PC-9 (cell line): ENCODE measurements at regions of chr11 and their contacts with region 1.

Region 1: DNA sequence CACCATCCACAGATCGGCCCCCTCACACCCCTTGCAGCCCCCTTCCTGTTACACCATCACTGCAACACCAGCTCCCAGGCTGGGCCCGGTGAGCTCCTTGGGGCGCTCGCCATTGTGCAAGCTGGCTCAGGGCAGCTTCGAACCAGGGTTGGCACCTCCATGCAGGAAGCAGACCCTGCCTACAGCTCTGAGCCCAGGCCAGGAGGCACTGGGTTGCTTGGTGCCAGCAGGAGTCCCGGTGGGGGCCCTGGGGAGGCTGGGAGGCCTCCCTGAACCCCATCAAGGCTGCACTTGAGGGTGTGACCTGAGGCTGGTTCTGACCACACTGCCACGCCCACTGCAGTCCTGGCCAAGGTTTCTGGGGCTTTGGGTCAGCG is 417.1 kb downstream of the CTTN start:
- DNase-seq: no peak
- H3K4me3 ChIP-seq: no peak overlapping the region
- H3K27ac ChIP-seq: no peak overlapping the region
- H3K4me1 ChIP-seq: no peaks in the 10 kb centered on the region
- H3K27me3 ChIP-seq: no peaks in the 10 kb centered on the region
- CTCF ChIP-seq: no peak

Region 2: DNA sequence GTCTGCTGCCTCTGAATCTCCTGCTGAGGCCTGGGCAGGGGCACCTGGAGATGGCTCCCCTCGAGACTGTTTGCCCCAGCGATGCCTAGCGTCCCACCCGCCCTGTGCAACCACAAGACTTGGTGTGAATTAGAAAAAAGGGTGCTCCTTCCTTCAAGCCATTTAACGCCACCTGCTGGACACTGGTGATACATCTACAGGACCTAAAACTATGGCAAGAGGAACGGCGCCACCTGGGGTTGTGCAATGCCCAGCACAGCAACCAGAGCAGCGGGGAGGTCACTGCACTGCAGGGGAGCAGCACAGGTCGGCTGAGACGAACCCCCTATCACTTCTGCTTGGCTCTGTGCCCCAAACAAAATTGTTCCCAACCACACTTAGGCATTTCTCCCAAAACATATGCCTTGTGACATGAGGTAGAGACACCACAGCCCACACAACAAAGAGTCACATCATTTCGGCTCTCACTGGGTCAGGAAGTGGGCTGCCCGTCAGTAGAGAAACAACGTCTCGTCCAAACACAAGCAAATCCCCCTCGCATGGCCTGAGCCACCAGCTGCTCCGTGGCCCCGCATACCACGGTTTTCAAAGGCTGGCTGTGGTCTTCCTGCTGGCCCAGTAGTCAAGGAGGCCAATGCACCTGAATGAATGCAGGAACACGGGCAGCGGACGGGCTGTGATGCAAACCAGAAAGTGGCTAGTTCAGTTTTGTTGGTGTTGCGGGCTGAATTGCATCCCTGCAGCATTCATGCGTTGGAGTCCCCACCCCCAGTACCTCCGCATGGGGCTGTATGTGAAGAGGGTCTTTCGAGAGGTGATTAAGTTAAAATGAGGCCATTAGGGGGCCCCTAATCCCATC is 265.0 kb after region 1 on chr11:
- CTCF ChIA-PET with region 1: no interaction called
- POLR2A ChIA-PET with region 1: no interaction called
- intact Hi-C with region 1: loop called (anchors 1 kb)
- DNase-seq: peak; percentile 71 to 82
- H3K4me3 ChIP-seq: no peak overlapping the region
- H3K27ac ChIP-seq: no peak overlapping the region
- H3K4me1 ChIP-seq: peaks cover 6% of the 10 kb centered on the region; the same call in 1 of the 2 replicates
- H3K27me3 ChIP-seq: no peaks in the 10 kb centered on the region
- CTCF ChIP-seq: peak; percentile 91